ENCODE measurements at regions of chr5 and their contacts with region 1.

Region 1: DNA sequence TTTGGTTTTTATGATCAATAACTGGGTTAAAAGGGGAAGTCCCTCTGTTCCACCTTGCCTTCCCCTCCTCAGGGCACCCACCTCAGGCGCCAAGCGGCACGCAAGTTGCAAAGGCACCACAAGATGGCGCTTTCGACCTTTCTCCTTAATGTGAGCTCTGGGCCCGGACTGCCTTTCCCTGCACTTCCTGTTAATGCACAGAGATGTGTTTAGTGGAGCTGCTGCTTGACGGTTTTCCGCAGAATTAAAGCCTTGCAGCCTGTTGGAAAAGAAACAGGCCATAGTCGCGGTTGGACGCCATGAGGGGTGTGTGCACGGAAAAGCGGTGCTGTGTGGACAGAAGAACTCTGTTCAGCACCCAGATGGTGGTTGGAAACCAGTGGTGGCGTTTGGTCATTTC is 17.9 kb downstream of the CXCL14 start:
- DNase-seq: peak; percentile 91
- H3K4me3 Mint-ChIP-seq: no peak overlapping the region
- H3K27ac Mint-ChIP-seq: no peak overlapping the region
- H3K4me1 Mint-ChIP-seq: peaks cover 6% of the 10 kb centered on the region
- H3K27me3 Mint-ChIP-seq: peaks cover 37% of the 10 kb centered on the region
- CTCF ChIP-seq: peak; percentile 94

Region 2: DNA sequence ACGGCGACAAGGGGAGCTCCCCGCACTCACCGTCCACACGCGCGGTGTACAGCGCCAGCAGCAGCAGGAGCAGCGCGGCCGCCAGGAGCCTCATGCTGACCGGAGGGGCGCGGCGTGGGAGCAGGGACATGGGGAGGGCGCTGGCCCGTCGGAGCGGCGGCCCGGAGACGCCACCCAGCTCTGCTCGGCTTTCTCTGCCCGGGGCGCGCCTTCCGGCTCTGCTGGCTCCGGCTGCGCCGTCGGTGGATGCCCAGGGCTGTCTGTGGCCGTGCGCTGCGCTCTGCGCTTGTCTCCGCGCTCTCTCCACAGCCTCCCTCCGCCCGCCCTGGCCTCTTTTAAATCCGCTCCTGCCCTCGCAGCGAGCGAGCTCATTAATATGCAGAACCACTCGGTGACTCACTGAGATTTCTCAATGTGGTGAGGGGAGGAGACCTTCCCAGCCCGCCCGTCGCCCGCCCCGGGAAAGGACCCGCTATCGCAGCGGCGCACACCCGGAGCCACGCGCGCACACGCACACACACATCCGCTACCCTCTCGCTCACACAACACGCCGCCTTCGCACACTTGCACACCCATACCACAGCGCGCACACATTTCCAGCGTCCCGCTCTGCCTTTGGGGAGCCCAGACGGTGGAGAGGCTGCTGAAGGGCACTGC is 18.0 kb after region 1 on chr5 and contains the start of gene CXCL14:
- CTCF ChIA-PET with region 1: interaction called, 391 read pairs
- POLR2A ChIA-PET with region 1: interaction called, 3 read pairs
- intact Hi-C with region 1: no loop called
- DNase-seq: peak; percentile 95
- H3K4me3 Mint-ChIP-seq: peak within 1 kb of the TSS; percentile 69
- H3K27ac Mint-ChIP-seq: no peak within 1 kb of the TSS
- H3K4me1 Mint-ChIP-seq: no peaks in the 10 kb centered on the region
- H3K27me3 Mint-ChIP-seq: peaks cover 50% of the 10 kb centered on the region
- CTCF ChIP-seq: no peak
- total RNA-seq, gene CXCL14: not detected in 2 replicates

Region 3: DNA sequence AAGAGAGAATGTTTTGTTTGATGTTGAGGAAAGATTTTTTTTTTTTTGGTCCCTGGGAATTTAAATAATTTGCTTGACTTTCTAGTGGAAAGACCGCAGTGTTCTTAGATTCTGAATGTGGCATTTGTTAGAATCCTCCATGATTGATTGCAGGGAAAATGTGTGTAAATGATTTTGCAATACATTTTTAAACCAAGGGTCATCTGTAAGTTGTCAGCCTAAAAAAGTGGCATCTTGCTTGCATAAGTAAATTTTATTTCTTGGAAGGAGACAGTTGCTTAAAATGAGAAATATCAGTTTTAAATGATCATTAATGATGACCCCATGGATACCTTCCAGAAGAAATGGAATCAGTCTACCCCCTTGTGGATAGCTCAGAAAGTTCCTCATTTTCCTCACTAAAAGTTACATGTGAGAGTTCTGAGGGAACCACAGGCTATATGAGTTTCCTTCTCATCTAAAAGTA is 168.5 kb after region 1 on chr5:
- CTCF ChIA-PET with region 1: interaction called, 476 read pairs
- POLR2A ChIA-PET with region 1: interaction called, 19 read pairs
- intact Hi-C with region 1: loop called (anchors 1 kb)
- DNase-seq: peak; percentile 48
- H3K4me3 Mint-ChIP-seq: no peak overlapping the region
- H3K27ac Mint-ChIP-seq: no peak overlapping the region
- H3K4me1 Mint-ChIP-seq: no peaks in the 10 kb centered on the region
- H3K27me3 Mint-ChIP-seq: no peaks in the 10 kb centered on the region
- CTCF ChIP-seq: peak; percentile 53

Region 4: DNA sequence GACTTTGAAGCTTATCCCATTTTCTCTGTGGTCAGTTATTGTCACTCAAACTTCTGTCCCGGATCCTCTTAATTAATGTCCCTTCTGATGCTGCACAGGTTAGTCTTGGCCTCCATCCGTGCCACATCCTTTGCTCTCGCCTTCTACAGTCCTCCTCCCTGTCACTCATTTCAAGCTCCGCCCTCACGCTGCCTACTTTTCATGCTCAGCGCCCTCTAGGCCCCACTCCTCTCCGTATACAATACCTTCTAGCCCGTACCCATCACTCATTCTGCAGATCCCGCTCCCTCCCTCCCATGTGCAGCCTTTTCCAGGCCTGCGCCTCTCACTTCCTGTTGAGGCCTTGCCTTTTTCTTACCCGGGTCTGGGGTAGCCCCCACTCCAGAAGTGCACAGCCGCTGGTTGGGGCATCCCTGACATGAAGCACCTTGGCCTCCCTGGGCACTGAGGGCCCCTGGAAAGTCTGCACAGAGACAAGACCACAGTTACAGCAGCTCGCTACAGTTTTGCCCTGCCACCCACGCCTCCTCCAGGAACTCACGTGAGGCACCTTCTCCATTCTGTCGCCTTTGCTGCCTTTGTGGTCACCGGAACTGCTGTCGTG is 185.1 kb after region 1 on chr5:
- CTCF ChIA-PET with region 1: interaction called, 38 read pairs
- POLR2A ChIA-PET with region 1: no interaction called
- intact Hi-C with region 1: no loop called
- DNase-seq: no peak
- H3K4me3 Mint-ChIP-seq: no peak overlapping the region
- H3K27ac Mint-ChIP-seq: no peak overlapping the region
- H3K4me1 Mint-ChIP-seq: no peaks in the 10 kb centered on the region
- H3K27me3 Mint-ChIP-seq: no peaks in the 10 kb centered on the region
- CTCF ChIP-seq: no peak

Region 5: DNA sequence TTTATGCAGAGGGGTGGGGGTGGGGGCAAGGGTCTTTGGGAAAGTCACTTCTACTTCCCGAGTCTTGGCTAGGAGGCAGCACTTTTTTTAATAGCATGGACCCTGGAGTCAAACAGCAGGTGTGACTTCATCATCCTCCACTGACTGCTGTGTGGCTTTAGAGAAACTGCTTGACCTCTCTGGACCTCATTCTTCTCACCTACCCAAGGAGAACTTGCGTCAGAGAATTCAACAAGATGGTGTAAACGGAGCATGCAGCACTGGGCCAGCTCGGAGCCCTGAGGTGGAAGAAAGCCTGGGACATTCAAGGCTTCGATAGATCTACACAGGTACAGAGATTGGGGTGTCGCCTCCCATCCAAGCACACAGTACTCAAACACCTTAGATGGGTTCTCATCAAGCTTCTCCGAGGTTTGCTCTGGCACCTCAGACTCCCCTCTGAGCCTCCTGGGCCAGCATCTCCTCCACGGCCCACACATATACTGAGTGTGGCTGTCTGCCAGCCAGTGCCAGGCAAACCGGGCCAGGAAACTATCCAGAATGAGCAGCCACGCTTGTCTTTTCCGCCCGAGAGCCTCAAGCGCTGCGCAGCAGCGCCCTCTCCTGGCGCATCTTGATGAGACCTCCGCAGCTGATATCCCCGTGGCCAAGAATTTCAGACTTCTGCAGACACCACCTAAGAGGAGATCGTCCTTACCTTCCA is 269.0 kb after region 1 on chr5:
- CTCF ChIA-PET with region 1: interaction called, 482 read pairs
- POLR2A ChIA-PET with region 1: interaction called, 11 read pairs
- intact Hi-C with region 1: loop called (anchors 1 kb)
- DNase-seq: peak; percentile 83
- H3K4me3 Mint-ChIP-seq: no peak overlapping the region
- H3K27ac Mint-ChIP-seq: no peak overlapping the region
- H3K4me1 Mint-ChIP-seq: peaks cover 5% of the 10 kb centered on the region
- H3K27me3 Mint-ChIP-seq: peaks cover 50% of the 10 kb centered on the region
- CTCF ChIP-seq: peak; percentile 96